Colonic mucosa (tissue), 4 donors: ENCODE measurements at regions of chr1 and their contacts with region 1.

Region 1: GRCh38 chr1:27858072-27858958 is 14.0 kb upstream of the THEMIS2 start:
- DNase-seq: peak; percentile 92
- H3K4me3 ChIP-seq: no peak overlapping the region
- H3K27ac ChIP-seq: no peak overlapping the region
- H3K4me1 ChIP-seq: no peaks in the 10 kb centered on the region
- H3K27me3 ChIP-seq: no peaks in the 10 kb centered on the region
- CTCF ChIP-seq: peak; percentile 99

Region 2: DNA sequence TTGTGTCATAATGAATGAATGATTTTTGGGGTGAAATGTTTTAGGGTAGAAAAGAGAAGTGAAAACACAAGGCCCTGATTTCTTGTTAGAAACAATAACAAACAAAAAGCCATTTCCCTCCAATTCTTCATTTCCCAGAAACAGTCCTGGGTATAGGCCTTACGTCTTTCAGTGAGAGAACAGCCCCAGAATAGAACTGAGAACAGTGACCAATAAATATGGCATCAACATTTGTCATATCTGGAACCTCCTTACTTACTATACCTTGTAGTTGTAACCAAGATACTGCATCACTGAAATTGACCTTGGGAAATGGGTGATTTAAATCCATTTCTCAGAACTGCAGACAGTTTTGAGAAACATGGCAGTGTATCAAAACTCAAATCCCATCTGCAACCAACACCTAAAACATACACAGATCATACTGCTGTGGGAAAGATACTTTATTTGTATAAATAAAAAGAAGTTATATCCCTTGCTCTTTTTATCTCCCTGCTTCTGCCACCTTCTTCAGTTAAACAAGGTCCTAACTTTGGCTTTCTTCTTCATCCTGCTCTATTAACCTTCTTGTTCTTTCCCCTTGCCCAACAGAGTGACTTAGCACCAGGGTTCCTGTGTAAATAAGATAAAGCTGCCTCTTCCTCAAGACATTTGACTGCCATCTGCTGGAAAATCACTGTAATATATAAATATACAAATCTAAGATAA is 121.0 kb after region 1 on chr1:
- intact Hi-C with region 1: loop called (anchors 2 kb)
- DNase-seq: no peak
- H3K4me3 ChIP-seq: no peak overlapping the region
- H3K27ac ChIP-seq: no peak overlapping the region
- H3K4me1 ChIP-seq: no peaks in the 10 kb centered on the region
- H3K27me3 ChIP-seq: no peaks in the 10 kb centered on the region
- CTCF ChIP-seq: peak; percentile 40

Region 3: GRCh38 chr1:28064064-28064463 is 205.7 kb after region 1 on chr1:
- intact Hi-C with region 1: no loop called
- DNase-seq: no peak
- H3K4me3 ChIP-seq: no peak overlapping the region
- H3K27ac ChIP-seq: no peak overlapping the region
- H3K4me1 ChIP-seq: peaks cover 4% of the 10 kb centered on the region
- H3K27me3 ChIP-seq: no peaks in the 10 kb centered on the region
- CTCF ChIP-seq: no peak